ENCODE measurements at regions of chr12 and their contacts with region 1.

Region 1: DNA sequence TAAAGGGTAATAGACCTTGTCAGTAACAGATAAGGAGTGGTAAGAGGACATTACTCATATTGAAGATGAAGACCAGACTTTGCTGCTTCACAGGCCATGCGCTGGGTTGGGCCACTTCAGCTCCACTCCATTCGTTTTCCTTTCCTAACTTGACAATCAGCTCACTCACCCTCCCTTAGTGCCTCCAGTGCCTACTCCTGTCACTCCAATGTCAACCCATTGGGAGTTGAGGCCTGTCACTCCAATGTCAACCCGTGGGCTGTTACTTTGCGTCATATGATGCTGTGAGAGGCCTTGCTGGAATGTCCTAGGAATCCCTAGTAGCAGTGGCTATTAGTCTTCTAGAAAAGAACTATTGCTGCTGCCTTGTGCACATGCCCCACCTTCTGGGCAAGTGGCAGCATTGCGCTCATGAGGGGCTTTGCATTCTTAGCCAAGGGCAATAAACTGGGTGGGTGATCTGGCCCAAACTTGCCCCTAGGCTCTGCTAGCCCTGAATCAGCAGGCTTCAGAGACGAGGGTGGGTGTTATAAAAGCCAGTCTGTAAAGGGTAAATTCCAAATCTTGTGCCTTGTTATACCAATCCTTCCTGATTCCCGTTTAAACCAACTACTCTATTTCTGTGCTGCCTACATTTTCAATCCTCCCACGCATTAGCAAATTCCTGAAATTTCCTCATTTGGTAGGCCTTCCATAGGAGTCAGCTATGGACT is 36.1 kb downstream of the BAZ2A start:
- DNase-seq: peak; percentile 61 to 84
- H3K4me3 ChIP-seq: no peak overlapping the region
- H3K27ac ChIP-seq: 0 out of 2 replicates have a peak overlapping the region, but pooled peaks have one; percentile 19
- H3K4me1 ChIP-seq: peaks cover 0 to 10% (median 4%) of the 10 kb centered on the region in 4 experiments; a peak in 5 of 7 replicates
- H3K27me3 ChIP-seq: no peaks in the 10 kb centered on the region
- CTCF ChIP-seq: peak; percentile 90 to 94 (median 92)
- EP300 ChIP-seq: no peak
- POLR2A ChIP-seq: no peak
- RAD21 ChIP-seq: peak; percentile 91 to 92

Region 2: DNA sequence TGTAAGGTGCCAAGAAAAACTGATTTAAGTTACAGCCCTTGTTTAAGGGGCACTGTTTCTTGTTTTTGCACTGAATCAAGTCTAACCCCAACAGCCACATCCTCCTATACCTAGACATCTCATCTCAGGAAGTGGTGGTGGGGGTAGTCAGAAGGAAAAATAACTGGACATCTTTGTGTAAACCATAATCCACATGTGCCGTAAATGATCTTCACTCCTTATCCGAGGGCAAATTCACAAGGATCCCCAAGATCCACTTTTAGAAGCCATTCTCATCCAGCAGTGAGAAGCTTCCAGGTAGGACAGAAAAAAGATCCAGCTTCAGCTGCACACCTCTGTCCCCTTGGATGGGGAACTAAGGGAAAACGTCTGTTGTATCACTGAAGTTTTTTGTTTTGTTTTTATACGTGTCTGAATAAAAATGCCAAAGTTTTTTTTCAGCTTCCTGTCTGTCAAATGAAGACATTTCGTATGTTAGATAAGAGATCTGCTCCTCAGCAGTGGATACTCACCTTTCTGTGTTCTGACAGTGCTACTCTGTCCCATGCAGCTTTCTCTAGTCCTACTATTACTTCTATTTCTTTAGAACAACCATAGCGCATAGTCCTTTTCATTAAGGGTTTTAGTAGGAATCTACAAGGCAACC is 490.9 kb before region 1 on chr12:
- CTCF ChIA-PET with region 1: no interaction called
- POLR2A ChIA-PET with region 1: no interaction called
- DNase-seq: no peak
- H3K4me3 ChIP-seq: peak overlapping the region in 3 of 4 experiments; percentile 50 to 95 (median 57); a peak in 6 of 8 replicates
- H3K27ac ChIP-seq: no peak overlapping the region
- H3K4me1 ChIP-seq: peaks cover 0 to 9% (median 3%) of the 10 kb centered on the region in 4 experiments; a peak in 5 of 7 replicates
- H3K27me3 ChIP-seq: no peaks in the 10 kb centered on the region
- CTCF ChIP-seq: no peak
- EP300 ChIP-seq: no peak
- POLR2A ChIP-seq: no peak
- RAD21 ChIP-seq: no peak

Region 3: DNA sequence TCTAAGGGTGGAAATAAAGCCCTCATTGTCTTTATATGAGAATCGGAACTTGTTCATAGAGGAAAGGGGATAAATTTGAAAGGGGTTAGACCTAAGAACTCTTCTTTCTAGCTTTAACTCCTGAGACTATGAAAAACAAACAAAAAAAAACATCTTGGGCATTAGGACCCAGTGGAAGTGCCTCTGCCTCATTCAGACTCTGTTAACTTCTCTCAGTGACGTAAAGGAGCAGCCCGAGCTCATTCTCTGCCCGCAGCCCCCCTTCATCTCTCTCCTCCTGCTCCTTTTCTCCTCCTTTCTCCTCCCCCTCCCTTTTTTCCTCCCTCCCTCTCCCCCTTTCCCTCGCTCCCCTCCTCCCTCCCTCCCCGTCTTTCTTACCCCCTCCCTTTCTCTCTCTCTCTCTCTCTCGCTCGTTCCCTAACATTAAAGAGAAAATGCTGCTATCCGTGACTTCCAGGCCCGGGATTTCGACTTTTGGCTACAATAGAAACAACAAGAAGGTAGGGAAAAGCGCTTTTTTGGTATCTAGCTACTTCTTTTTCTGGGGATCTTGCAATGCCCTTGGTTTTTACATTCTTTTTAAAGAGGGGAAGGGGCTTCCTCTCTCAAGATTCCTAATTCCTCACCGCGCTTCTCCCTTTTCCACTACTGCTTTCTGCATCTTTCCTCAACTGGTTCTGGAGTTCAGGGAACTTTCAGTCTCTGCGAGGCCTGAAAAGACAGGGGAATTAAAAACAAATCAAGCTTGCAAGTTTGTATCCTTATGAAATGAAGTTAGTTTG is 72.3 kb before region 1 on chr12 and contains the start of gene RBMS2:
- CTCF ChIA-PET with region 1: interaction called, 279 read pairs
- POLR2A ChIA-PET with region 1: interaction called, 7 read pairs
- DNase-seq: peak in 1 of 2 experiments; percentile 73
- H3K4me3 ChIP-seq: peak within 1 kb of the TSS; percentile 53 to 84 (median 65)
- H3K27ac ChIP-seq: no peak within 1 kb of the TSS
- H3K4me1 ChIP-seq: peaks cover under 1 to 2% (median 2%) of the 10 kb centered on the region in 4 experiments; a peak in 5 of 7 replicates
- H3K27me3 ChIP-seq: no peaks in the 10 kb centered on the region
- CTCF ChIP-seq: no peak
- EP300 ChIP-seq: no peak; a peak in 1 of 3 replicates
- POLR2A ChIP-seq: no peak
- RAD21 ChIP-seq: no peak
- total RNA-seq, gene RBMS2: 25.5 and 31.3 TPM in 2 replicates

Region 4: DNA sequence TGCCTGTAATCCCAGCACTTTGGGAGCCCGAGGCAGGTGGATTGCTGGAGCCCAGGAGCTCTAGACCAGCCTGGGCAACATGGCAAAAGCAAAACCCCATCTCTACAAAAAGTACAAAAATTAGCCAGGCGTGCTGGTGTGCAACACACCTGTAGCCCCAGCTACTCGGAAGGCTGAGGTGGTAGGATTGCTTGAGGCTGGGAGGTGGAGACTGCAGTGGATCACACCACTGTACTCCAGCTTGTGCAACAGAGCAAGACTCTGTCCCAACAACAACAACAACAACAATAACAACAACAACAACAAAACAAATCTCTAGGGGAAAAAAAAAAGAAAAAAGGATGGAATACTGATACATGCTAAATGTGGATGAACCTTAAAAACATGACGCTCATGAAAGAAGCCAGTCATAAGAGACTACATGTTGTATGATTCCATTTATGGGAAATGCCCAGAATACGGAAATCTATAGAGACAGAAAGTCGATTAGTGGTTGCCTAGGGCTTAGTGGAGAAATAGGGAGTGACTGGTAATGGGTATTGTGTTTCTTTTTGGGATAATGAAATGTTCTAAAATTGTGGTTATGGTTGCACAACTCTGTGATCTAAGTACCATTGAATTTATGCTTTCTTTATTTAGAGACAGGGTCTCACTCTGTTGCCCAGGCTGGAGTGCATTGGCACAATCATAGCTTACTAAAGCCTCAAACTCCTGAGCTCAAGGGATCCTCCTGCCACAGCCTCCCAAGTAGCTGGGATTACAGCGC is 64.6 kb before region 1 on chr12:
- CTCF ChIA-PET with region 1: interaction called, 279 read pairs
- POLR2A ChIA-PET with region 1: interaction called, 3 read pairs
- DNase-seq: no peak
- H3K4me3 ChIP-seq: no peak overlapping the region
- H3K27ac ChIP-seq: no peak overlapping the region; the same call in 1 of the 2 replicates
- H3K4me1 ChIP-seq: peaks cover 0 to 8% (median 4%) of the 10 kb centered on the region in 4 experiments; a peak in 3 of 7 replicates
- H3K27me3 ChIP-seq: no peaks in the 10 kb centered on the region
- CTCF ChIP-seq: no peak
- EP300 ChIP-seq: no peak
- POLR2A ChIP-seq: no peak
- RAD21 ChIP-seq: no peak

Region 5: DNA sequence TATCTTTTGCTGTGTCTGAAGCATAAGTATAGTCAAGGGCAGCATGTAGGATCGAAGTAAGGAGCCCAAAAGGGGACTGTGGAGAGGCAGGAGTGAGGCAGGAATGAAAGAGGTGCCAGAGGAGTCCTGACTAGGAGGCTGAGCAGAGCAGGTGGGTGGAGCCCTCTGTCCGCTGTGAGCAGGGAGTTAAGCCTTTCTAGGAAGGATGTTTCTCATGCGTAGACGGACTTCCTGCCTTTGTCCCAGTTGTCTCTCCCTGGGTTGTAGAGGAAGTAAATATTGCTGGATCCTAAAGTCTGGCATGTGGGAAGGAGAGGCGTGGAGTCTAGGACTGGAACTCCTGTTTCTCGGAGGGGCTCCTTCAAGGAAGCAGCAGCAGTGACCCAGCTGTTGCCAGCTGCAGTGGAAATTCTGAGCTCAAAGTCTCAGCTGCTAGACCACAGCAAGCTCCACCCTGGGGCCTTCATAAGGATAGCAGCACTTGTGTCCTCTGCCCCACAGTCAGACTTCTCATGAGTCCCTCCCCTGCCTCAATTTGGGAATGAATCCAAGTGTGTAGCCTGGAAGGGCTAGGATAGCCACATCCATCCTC is 28.5 kb before region 1 on chr12:
- CTCF ChIA-PET with region 1: interaction called, 12 read pairs
- POLR2A ChIA-PET with region 1: no interaction called
- DNase-seq: peak in 1 of 2 experiments; percentile 53
- H3K4me3 ChIP-seq: no peak overlapping the region
- H3K27ac ChIP-seq: no peak overlapping the region
- H3K4me1 ChIP-seq: peaks cover 0 to 4% (median 2%) of the 10 kb centered on the region in 4 experiments; a peak in 4 of 7 replicates
- H3K27me3 ChIP-seq: no peaks in the 10 kb centered on the region
- CTCF ChIP-seq: no peak
- EP300 ChIP-seq: no peak
- POLR2A ChIP-seq: no peak
- RAD21 ChIP-seq: no peak

Region 6: GRCh38 chr12:56581418-56582145 is 12.5 kb before region 1 on chr12:
- CTCF ChIA-PET with region 1: interaction called, 220 read pairs
- POLR2A ChIA-PET with region 1: interaction called, 10 read pairs
- DNase-seq: no peak
- H3K4me3 ChIP-seq: no peak overlapping the region
- H3K27ac ChIP-seq: no peak overlapping the region
- H3K4me1 ChIP-seq: no peaks in the 10 kb centered on the region; a peak in 1 of 7 replicates
- H3K27me3 ChIP-seq: no peaks in the 10 kb centered on the region
- CTCF ChIP-seq: no peak
- EP300 ChIP-seq: no peak
- POLR2A ChIP-seq: no peak
- RAD21 ChIP-seq: no peak

Region 7: DNA sequence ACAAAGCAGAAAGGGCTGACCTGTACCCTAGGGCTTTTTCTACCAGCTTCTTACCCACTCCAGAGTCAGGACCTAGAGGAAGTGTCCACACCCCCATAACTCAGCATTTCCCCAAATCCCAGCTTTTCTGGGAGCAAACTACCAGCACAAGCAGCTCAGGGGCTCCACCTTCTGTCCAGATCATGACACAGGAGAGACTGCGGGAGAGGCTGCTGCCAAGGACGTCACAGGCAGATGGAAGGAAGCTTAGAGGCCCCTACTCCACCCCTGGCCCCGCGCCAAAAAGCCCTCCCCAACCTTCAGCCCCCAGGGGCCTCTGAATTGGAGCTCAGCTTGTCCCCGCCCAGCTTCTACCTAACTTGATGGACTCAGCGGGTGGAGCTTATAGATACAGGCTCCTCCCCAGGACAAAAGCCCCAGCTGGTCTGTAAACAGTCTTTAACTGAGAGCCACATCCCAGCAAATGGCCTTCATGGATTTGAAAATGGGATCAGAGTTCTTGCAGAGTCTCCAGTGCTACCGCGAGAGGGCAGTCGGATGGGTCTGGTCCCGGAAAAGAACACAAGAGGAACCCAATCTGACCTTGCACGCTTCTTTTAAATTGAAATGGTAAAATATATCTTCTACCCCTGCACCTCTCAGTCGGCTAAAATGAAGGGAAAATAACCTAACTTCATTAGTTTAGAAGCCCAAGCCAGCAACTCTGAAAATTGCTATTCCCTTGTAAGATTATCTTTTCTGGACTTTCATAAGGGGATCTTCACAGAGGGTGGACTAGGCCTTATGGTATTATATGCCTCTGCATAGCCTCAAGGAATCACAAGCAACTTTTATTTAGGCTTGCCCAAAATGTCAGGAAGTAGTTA is 42.8 kb after region 1 on chr12:
- CTCF ChIA-PET with region 1: interaction called, 29 read pairs
- POLR2A ChIA-PET with region 1: interaction called, 6 read pairs
- DNase-seq: peak; percentile 92 to 95
- H3K4me3 ChIP-seq: peak overlapping the region; percentile 86 to 90 (median 88); a peak in 7 of 8 replicates
- H3K27ac ChIP-seq: peak overlapping the region; percentile 27; the same call in 1 of the 2 replicates
- H3K4me1 ChIP-seq: peaks cover 8 to 36% (median 24%) of the 10 kb centered on the region in 4 experiments
- H3K27me3 ChIP-seq: no peaks in the 10 kb centered on the region
- CTCF ChIP-seq: peak; percentile 67 to 70 (median 68)
- EP300 ChIP-seq: peak in 1 of 2 experiments; percentile 72; a peak in 1 of 3 replicates
- POLR2A ChIP-seq: peak in 1 of 2 experiments; percentile 35; a peak in 1 of 3 replicates
- RAD21 ChIP-seq: peak; percentile 68 to 73

Region 8: GRCh38 chr12:56684745-56685359 is 90.8 kb after region 1 on chr12:
- CTCF ChIA-PET with region 1: no interaction called
- POLR2A ChIA-PET with region 1: no interaction called
- DNase-seq: no peak
- H3K4me3 ChIP-seq: peak overlapping the region in 3 of 4 experiments; percentile 11 to 81 (median 14); a peak in 5 of 8 replicates
- H3K27ac ChIP-seq: no peak overlapping the region
- H3K4me1 ChIP-seq: peaks cover 0 to 3% (median 0%) of the 10 kb centered on the region in 4 experiments; a peak in 3 of 7 replicates
- H3K27me3 ChIP-seq: no peaks in the 10 kb centered on the region
- CTCF ChIP-seq: no peak
- EP300 ChIP-seq: no peak
- POLR2A ChIP-seq: no peak
- RAD21 ChIP-seq: no peak

Region 9: DNA sequence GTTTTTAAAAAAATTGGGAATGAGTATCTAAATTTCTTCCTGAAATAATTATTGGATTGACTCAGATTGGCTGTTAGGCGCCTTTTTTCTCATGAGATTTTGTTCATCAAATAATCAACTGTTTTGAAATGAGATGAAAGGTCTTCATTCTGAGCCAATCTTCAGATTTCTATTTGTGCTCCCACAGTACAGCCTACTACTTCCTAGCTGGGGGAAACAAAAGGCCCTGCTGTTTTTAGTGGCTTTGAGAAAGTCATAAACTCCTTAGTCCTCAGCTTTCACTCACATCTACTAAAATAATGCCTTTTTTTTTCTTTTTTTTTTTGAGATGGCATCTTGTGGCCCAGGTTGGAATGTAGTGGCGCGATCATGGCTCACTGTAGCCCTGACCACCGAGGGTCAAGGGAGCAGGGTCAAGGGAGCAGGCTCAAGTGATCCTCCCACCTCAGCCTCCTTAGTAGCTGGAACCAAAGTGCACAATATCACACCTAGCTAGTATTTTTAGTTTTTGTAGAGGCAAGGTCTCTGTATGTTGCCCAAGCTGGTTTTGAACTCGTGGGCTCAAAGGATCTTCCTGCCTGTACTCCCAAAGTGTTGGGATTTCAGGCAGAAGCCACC is 115.8 kb after region 1 on chr12:
- CTCF ChIA-PET with region 1: no interaction called
- POLR2A ChIA-PET with region 1: no interaction called
- DNase-seq: no peak
- H3K4me3 ChIP-seq: no peak overlapping the region
- H3K27ac ChIP-seq: no peak overlapping the region
- H3K4me1 ChIP-seq: no peaks in the 10 kb centered on the region
- H3K27me3 ChIP-seq: no peaks in the 10 kb centered on the region
- CTCF ChIP-seq: no peak
- EP300 ChIP-seq: no peak
- POLR2A ChIP-seq: no peak
- RAD21 ChIP-seq: no peak

Measured in H1 (cell line).